Mammary epithelial cell (primary cell): ENCODE measurements at regions of chr15 and their contacts with region 1.

Region 1: DNA sequence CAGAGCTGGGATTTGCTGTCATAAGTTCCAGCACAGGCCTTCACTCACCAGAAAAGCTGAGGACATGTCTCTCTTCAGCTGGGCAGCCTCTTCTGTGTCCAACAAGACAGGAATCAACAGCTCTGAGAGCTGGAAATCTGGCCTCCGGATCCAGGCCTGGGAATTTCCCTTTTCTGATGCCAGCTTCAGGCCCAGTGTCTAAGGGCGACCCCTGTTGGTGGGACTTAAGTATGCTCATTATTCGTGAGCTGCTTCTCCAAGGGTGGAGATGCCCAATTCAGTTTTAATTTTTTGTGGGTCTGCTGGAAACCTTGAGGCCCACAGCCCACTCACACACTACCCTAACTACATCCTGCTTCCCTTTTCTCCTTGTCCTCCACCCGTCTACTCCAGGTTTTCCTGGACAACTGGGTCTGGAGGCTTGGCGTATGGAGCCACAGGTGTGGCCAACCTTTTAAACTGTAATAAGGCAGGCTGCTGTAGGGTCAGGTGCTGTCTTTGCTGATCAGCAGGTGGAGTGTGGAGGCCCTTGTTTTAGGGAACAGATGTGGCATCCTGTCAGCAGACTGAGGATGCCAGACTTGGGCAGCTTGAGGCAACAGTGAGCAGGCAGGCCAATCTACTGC is 2.6 kb upstream of the CEMIP start:
- DNase-seq: peak; percentile 69
- H3K4me3 ChIP-seq: no peak overlapping the region
- H3K27ac ChIP-seq: peak overlapping the region; percentile 38
- H3K4me1 ChIP-seq: peaks cover 26% of the 10 kb centered on the region
- H3K27me3 ChIP-seq: no peaks in the 10 kb centered on the region
- CTCF ChIP-seq: peak; percentile 86 to 90

Region 2: GRCh38 chr15:80567721-80568157 is 208.8 kb before region 1 on chr15:
- CTCF ChIA-PET with region 1: interaction called, 33 read pairs
- dilution Hi-C with region 1: loop called (anchors 25 kb)
- in situ Hi-C with region 1: loop called (anchors 5 kb)
- intact Hi-C with region 1: loop called (anchors 1 kb)
- DNase-seq: peak; percentile 68
- H3K4me3 ChIP-seq: no peak overlapping the region
- H3K27ac ChIP-seq: no peak overlapping the region
- H3K4me1 ChIP-seq: no peaks in the 10 kb centered on the region
- H3K27me3 ChIP-seq: no peaks in the 10 kb centered on the region
- CTCF ChIP-seq: peak; percentile 83 to 94

Region 3: DNA sequence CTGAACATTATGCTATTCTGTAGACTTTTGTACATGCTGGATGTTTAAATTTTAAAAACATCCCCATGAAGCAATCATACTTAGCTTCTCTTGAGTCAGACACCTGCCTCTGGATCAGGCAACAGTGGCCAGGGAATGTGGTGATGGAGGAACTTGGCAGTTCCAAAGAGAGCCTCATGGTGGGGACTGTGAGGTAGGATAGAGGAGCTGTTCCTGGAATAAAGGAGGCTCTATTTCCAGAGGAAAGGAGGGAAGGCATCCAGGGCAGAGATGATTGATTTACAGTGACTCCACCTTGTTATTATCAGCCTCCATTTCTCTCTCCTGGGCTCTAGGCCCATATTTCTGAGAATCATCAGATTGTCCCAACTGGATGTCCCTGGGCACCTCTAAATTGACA is 116.4 kb before region 1 on chr15:
- CTCF ChIA-PET with region 1: interaction called, 9 read pairs
- dilution Hi-C with region 1: no loop called
- in situ Hi-C with region 1: no loop called
- intact Hi-C with region 1: loop called (anchors 1 kb)
- DNase-seq: no peak
- H3K4me3 ChIP-seq: no peak overlapping the region
- H3K27ac ChIP-seq: no peak overlapping the region
- H3K4me1 ChIP-seq: peaks cover 27% of the 10 kb centered on the region
- H3K27me3 ChIP-seq: no peaks in the 10 kb centered on the region
- CTCF ChIP-seq: peak; percentile 33 to 54

Region 4: GRCh38 chr15:80804965-80805495 is 28.5 kb after region 1 on chr15:
- CTCF ChIA-PET with region 1: no interaction called
- dilution Hi-C with region 1: no loop called
- in situ Hi-C with region 1: no loop called
- intact Hi-C with region 1: no loop called
- DNase-seq: no peak
- H3K4me3 ChIP-seq: no peak overlapping the region
- H3K27ac ChIP-seq: no peak overlapping the region
- H3K4me1 ChIP-seq: no peaks in the 10 kb centered on the region
- H3K27me3 ChIP-seq: no peaks in the 10 kb centered on the region
- CTCF ChIP-seq: no peak

Region 5: GRCh38 chr15:80856809-80857377 is 80.4 kb after region 1 on chr15:
- CTCF ChIA-PET with region 1: interaction called, 3 read pairs
- dilution Hi-C with region 1: no loop called
- in situ Hi-C with region 1: no loop called
- intact Hi-C with region 1: loop called (anchors 2 kb)
- DNase-seq: no peak
- H3K4me3 ChIP-seq: no peak overlapping the region
- H3K27ac ChIP-seq: no peak overlapping the region
- H3K4me1 ChIP-seq: peaks cover 26% of the 10 kb centered on the region
- H3K27me3 ChIP-seq: no peaks in the 10 kb centered on the region
- CTCF ChIP-seq: no peak

Region 6: GRCh38 chr15:80970018-80970658 is 193.6 kb after region 1 on chr15:
- CTCF ChIA-PET with region 1: interaction called, 5 read pairs
- dilution Hi-C with region 1: loop called (anchors 10 kb)
- in situ Hi-C with region 1: loop called in 1 of 2 experiments (anchors 5 kb)
- intact Hi-C with region 1: loop called (anchors 1 kb)
- DNase-seq: peak; percentile 37
- H3K4me3 ChIP-seq: no peak overlapping the region
- H3K27ac ChIP-seq: no peak overlapping the region
- H3K4me1 ChIP-seq: no peaks in the 10 kb centered on the region
- H3K27me3 ChIP-seq: no peaks in the 10 kb centered on the region
- CTCF ChIP-seq: peak; percentile 57 to 79

Region 7: DNA sequence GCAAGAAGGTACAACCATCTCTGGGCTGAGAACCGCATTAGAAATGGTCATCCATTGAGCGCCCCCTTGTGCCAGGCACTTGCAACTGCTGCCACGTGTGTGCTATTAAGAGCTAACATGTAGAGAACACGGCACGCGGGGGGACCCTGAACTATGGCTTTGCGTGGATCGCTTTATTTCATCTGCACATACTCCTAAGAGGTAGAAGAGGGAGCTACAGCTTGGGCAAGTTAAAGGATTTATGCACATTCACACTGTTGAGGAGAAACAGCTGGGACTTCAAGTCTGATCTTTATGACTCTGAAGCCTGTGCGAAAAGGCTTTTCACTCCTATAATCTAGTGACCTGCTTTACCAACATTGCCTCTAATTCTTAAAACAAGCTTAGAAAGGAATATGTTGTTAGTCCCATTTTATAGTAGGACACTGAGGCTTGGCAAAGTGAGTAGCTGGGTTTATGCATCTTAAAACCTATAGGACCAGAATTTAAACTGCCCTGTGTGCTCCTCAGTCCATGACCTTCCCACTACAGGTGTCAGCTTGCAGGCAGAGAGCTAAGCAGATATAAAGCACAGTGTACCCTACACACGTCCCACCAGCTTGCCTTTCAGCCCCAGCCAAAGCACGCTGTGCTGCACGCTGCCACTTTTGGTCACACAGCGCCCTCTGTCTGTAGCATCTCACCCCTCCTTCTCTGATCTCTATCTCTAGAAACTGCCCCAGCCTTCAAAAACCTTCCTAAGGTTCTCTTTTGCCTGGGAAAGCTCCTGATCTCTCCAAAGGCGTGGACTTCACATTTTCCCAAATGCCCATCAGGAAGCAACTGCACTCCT is 489.6 kb after region 1 on chr15:
- CTCF ChIA-PET with region 1: interaction called, 4 read pairs
- dilution Hi-C with region 1: no loop called
- in situ Hi-C with region 1: no loop called
- intact Hi-C with region 1: loop called (anchors 1 kb)
- DNase-seq: peak; percentile 59
- H3K4me3 ChIP-seq: peak overlapping the region in 1 of 3 experiments; percentile 1
- H3K27ac ChIP-seq: no peak overlapping the region
- H3K4me1 ChIP-seq: peaks cover 5% of the 10 kb centered on the region
- H3K27me3 ChIP-seq: no peaks in the 10 kb centered on the region
- CTCF ChIP-seq: peak; percentile 95 to 96